Aorta (tissue), 5 donors: ENCODE measurements at regions of chr14 and their contacts with region 1.

Region 1: GRCh38 chr14:64345513-64345912 is 42.6 kb upstream of the MTHFD1 start:
- DNase-seq: no peak
- ATAC-seq: no peak
- H3K4me3 ChIP-seq: no peak overlapping the region
- H3K27ac ChIP-seq: no peak overlapping the region
- H3K4me1 ChIP-seq: no peaks in the 10 kb centered on the region
- H3K27me3 ChIP-seq: no peaks in the 10 kb centered on the region

Region 2: GRCh38 chr14:64478634-64479250 is 133.2 kb after region 1 on chr14:
- intact Hi-C with region 1: loop called (anchors 2 kb)
- DNase-seq: no peak
- ATAC-seq: peak; percentile 50
- H3K4me3 ChIP-seq: no peak overlapping the region
- H3K27ac ChIP-seq: no peak overlapping the region
- H3K4me1 ChIP-seq: no peaks in the 10 kb centered on the region
- H3K27me3 ChIP-seq: no peaks in the 10 kb centered on the region